Caco-2 (cell line): ENCODE measurements at regions of chr2 and their contacts with region 1.

Region 1: DNA sequence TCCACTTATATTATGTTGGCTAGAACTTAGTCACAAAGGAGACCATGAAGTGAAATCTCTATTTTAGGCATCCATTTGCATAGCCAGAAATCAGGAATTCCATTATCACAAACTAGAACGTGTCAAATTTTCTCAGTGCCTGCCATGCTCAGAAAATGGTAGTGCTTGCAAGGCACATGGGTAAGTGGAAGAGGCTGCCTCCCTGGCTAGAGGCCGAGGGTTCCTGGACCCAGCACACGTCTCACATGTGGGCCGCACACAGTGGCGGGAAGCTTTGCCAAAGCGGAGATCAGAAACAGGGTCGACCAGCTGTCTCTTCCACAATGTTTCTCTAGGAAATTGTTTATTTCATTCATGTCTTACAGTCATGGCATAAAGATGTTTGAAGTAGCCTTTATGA is 42.3 kb downstream of the TRAF3IP1 start:
- DNase-seq: no peak
- H3K4me3 ChIP-seq: no peak overlapping the region
- H3K4me3 Mint-ChIP-seq: no peak overlapping the region
- H3K27ac Mint-ChIP-seq: no peak overlapping the region
- H3K4me1 ChIP-seq: no peaks in the 10 kb centered on the region
- H3K4me1 Mint-ChIP-seq: no peaks in the 10 kb centered on the region
- H3K27me3 ChIP-seq: no peaks in the 10 kb centered on the region
- H3K27me3 Mint-ChIP-seq: no peaks in the 10 kb centered on the region
- CTCF ChIP-seq: no peak

Region 2: DNA sequence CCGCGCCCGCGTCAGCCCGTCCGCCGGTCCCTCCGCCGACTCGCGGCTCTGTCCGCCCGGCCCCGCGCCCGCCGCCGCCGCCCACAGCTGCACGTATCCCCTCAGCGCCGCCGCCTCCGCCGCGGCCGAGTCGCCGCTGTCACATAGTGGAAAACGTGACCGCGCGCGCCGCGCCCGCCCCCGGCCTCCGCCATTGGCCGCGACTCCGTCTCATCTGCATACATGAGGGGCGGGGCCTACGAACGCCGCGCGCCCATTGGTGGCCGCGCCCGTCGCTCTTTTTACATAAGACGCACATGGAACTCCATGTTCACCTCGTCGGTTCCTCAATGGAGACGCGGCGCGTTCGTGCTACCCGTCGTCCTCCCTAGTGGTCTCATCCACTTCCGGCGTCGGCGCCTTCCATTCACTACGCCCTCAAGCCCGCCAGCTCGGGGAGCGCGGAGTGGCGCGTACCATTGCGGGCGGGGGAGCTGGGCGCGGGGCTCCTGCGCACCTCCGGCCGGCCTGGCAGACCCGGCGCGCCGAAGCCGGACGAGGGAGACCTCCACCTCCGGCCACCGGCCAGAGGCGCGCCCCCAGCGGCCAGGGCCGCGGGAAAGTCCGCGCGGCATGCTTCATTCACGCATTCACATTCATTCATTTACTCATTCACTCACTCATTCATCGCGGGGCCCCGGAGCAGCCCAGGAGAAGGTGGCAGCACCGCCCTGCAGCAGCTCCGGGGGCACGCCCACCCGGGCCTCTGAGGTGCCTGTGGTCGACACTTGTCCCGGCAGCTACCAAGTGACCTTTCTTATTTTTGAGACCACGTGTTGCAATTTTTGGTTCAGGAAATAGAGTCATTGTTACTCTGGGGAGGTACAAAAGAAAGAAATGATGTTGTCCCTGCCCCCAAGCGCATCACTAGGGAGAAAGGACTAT is 73.7 kb before region 1 on chr2:
- CTCF ChIA-PET with region 1: no interaction called
- POLR2A ChIA-PET with region 1: no interaction called
- intact Hi-C with region 1: no loop called
- DNase-seq: peak; percentile 94 to 97
- H3K4me3 ChIP-seq: peak overlapping the region; percentile 92
- H3K4me3 Mint-ChIP-seq: peak overlapping the region; percentile 85
- H3K27ac Mint-ChIP-seq: peak overlapping the region; percentile 91
- H3K4me1 ChIP-seq: peaks cover 31% of the 10 kb centered on the region
- H3K4me1 Mint-ChIP-seq: peaks cover 10% of the 10 kb centered on the region
- H3K27me3 ChIP-seq: no peaks in the 10 kb centered on the region
- H3K27me3 Mint-ChIP-seq: no peaks in the 10 kb centered on the region
- CTCF ChIP-seq: peak; percentile 34 to 48

Region 3: GRCh38 chr2:238426568-238427434 is 64.2 kb after region 1 on chr2 and contains the start of gene ASB1:
- CTCF ChIA-PET with region 1: no interaction called
- POLR2A ChIA-PET with region 1: no interaction called
- intact Hi-C with region 1: loop called (anchors 2 kb)
- DNase-seq: peak; percentile 74 to 76
- H3K4me3 ChIP-seq: peak within 1 kb of the TSS; percentile 88
- H3K4me3 Mint-ChIP-seq: peak within 1 kb of the TSS; percentile 81
- H3K27ac Mint-ChIP-seq: peak within 1 kb of the TSS; percentile 48
- H3K4me1 ChIP-seq: 0 out of 2 replicates have a peak, but pooled peaks cover 6% of the 10 kb centered on the region
- H3K4me1 Mint-ChIP-seq: no peaks in the 10 kb centered on the region
- H3K27me3 ChIP-seq: no peaks in the 10 kb centered on the region
- H3K27me3 Mint-ChIP-seq: no peaks in the 10 kb centered on the region
- CTCF ChIP-seq: no peak
- total RNA-seq, gene ASB1: 14.2 and 16.9 TPM in 2 replicates

Region 4: DNA sequence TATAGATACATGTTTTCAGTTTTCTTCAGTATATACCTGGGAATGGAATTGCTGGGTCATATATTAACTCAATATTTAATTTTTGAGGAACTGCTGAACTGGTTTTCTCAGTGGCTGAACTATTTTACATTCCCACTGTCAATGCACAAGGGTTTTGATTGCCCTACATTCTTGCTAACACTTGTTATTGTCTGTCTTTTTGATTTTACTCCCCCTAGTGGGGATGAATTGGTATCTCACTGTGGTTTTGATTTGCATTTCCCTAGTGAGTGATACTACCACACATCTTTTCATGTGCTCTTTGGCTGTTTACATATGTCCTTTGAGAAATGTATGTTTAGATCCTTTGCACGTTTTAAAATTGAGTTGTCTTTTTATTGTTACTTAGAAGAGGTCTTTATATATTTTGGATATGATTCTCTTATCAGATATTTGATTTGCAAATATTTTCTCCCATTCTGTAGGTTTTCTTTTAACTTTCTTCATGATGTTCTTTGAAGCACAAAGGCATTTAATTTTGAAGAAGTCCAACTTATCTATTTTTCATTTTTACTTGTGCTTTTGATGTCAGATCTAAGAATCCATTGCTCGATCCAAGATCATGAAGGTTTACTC is 100.3 kb after region 1 on chr2:
- CTCF ChIA-PET with region 1: no interaction called
- POLR2A ChIA-PET with region 1: no interaction called
- intact Hi-C with region 1: loop called (anchors 1 kb)
- DNase-seq: peak in 1 of 2 experiments; percentile 35
- H3K4me3 ChIP-seq: no peak overlapping the region
- H3K4me3 Mint-ChIP-seq: no peak overlapping the region
- H3K27ac Mint-ChIP-seq: no peak overlapping the region
- H3K4me1 ChIP-seq: no peaks in the 10 kb centered on the region
- H3K4me1 Mint-ChIP-seq: no peaks in the 10 kb centered on the region
- H3K27me3 ChIP-seq: no peaks in the 10 kb centered on the region
- H3K27me3 Mint-ChIP-seq: no peaks in the 10 kb centered on the region
- CTCF ChIP-seq: peak; percentile 42 to 44